Activated CD4-positive, alpha-beta T cell treated with anti-CD3 and anti-CD28 coated beads, Interleukin-2, amount 10 ng/mL, durations not matched to agents 24 days and 14 days (primary cell): ENCODE measurements at regions of chrX and their contacts with region 1.

Region 1: DNA sequence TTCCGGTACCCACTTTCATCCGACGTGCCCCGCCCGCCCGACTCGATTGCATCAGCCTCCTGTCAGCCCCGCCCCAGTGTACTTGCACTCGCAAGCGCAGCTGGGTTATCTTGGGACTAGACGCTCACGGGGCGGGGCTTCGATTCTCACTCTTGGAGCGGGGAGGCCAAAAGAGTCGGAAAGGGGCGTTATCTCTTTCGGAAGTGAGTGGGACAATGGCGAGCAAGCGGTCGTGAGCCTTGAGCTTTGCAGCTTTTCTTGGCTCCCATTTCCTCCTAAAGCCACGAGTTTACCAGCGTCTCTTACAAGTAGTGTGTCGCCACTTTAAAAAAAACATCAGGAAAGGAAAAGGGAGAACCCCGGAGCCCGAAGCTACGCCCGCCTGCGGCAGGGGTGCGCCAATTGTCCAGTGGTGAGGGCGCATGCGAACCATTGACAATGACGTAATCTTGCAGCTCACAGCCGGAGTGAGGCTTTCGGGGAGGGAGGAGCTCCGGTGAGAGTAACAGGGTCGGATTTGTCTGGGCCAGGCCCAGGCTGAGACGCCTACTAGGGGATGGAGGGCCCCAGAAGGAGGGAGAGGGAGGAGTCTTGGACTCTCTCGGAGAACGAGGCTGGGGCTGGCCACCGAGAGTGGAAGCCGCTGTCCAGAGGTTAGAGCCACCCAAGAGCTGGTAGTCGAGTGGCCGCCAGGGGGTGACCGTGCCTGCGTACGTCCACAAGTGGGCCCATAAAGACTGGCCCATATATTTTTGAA is 109.5 kb downstream of the GNL3L start:
- DNase-seq: peak; percentile 96
- H3K4me3 Mint-ChIP-seq: peak overlapping the region; percentile 97
- H3K27ac Mint-ChIP-seq: peak overlapping the region; percentile 100
- H3K4me1 Mint-ChIP-seq: peaks cover 7% of the 10 kb centered on the region
- H3K27me3 Mint-ChIP-seq: no peaks in the 10 kb centered on the region

Region 2: DNA sequence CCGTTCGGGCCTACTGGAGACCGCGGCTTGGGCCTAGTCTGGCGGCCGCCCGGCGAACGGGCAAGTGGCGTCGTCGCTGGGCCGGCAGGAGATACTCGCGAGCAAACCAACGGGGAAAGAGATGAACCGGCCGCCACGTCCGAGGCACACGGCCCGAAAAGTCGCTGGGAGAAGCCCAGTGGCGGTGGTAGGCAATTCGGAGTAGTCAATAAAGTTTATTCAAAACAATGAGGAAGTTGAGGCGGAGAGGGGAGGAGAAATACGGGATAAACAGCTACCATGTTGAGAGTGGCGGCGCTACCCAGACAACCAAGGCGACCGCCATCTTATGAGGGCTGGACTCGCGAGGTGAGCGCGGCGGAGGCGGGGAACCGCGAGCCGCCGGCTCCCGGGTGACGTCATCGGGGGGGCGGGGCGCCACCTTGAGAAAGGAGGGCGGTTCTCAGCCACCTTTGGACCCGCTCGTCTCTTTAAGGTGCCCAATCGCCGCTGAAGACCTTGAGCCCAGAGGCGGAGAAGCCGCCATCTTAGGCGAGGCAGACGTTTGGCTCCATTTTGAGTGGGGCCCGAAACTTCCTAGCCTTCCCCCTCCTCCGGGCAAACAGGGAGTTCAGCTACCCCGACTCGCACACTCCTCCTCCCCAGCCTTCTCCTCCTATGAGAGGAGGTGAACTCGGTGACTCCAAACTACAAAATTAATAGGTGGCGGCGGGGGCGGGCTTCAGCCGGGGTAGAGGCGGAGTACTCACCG is 595.2 kb before region 1 on chrX and contains the start of gene PHF8:
- intact Hi-C with region 1: loop called (anchors 5 kb)
- DNase-seq: peak; percentile 98
- H3K4me3 Mint-ChIP-seq: peak within 1 kb of the TSS; percentile 93
- H3K27ac Mint-ChIP-seq: peak within 1 kb of the TSS; percentile 98
- H3K4me1 Mint-ChIP-seq: peaks cover 16% of the 10 kb centered on the region
- H3K27me3 Mint-ChIP-seq: no peaks in the 10 kb centered on the region
- total RNA-seq, gene PHF8: 50.7 and 53.4 TPM in 2 replicates

Region 3: GRCh38 chrX:54529552-54530357 is 109.8 kb before region 1 on chrX and contains the start of gene GNL3L:
- intact Hi-C with region 1: loop called (anchors 1 kb)
- DNase-seq: peak; percentile 92
- H3K4me3 Mint-ChIP-seq: peak within 1 kb of the TSS; percentile 94
- H3K27ac Mint-ChIP-seq: peak within 1 kb of the TSS; percentile 96
- H3K4me1 Mint-ChIP-seq: peaks cover 18% of the 10 kb centered on the region
- H3K27me3 Mint-ChIP-seq: no peaks in the 10 kb centered on the region
- total RNA-seq, gene GNL3L: 78.4 and 78.8 TPM in 2 replicates

Region 4: GRCh38 chrX:54999717-55000598 is 360.4 kb after region 1 on chrX and contains the start of gene APEX2:
- intact Hi-C with region 1: loop called (anchors 1 kb)
- DNase-seq: peak; percentile 96
- H3K4me3 Mint-ChIP-seq: peak within 1 kb of the TSS; percentile 97
- H3K27ac Mint-ChIP-seq: peak within 1 kb of the TSS; percentile 87
- H3K4me1 Mint-ChIP-seq: peaks cover 14% of the 10 kb centered on the region
- H3K27me3 Mint-ChIP-seq: no peaks in the 10 kb centered on the region
- total RNA-seq, gene APEX2: 32.2 and 36.1 TPM in 2 replicates

Region 5: DNA sequence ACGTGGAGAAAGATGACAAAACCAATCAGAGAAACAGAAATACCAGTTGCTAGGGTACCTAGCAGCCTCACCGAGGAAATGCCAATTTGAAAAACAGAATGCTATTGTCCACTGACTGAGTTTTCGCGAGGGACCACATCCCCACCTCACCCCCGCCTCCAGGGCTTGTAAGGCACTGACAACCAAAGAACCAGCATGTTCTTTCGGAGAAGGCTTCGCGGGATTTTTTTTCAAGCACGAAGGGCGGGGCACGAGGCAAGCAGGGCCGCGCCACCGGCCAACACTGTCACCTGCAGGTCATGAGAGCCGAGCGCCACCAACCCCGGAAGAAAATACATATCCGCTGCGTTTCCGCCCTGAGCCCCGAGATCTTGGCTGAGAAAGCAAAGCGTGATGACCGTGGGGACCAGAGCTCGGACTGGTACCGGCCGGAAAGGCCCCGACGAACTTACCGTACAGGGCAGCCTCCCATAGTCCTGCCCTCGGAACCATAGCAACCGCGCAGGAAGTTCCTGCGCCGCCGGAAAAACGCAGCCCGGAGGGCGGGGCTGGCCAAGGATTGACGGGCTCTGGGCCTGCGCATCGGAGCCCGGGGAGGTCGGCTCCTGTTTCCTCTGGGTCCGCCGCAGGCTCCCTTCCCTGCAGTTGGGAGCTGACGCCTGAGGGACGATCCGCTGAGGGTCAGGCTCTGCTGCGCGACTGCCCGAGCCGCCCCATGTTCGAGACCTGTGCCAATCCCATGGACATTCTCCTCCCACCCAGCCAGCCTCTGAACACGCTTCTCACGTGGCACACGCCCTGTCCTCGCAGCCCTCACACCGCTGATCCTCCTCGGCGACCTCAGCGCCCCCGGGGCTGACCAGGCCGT is 521.4 kb after region 1 on chrX:
- intact Hi-C with region 1: loop called (anchors 1 kb)
- DNase-seq: peak; percentile 96
- H3K4me3 Mint-ChIP-seq: peak overlapping the region; percentile 90
- H3K27ac Mint-ChIP-seq: peak overlapping the region; percentile 97
- H3K4me1 Mint-ChIP-seq: peaks cover 10% of the 10 kb centered on the region
- H3K27me3 Mint-ChIP-seq: peaks cover 13% of the 10 kb centered on the region